ENCODE measurements at regions of chr1 and their contacts with region 1.

Region 1: GRCh38 chr1:109643385-109644230 is 12.3 kb upstream of the GSTM4 start:
- DNase-seq: peak; percentile 73 to 94 (median 86)
- ATAC-seq: peak; percentile 94
- H3K4me3 ChIP-seq: no peak overlapping the region
- H3K4me3 Mint-ChIP-seq: no peak overlapping the region
- H3K27ac ChIP-seq: no peak overlapping the region
- H3K27ac Mint-ChIP-seq: peak overlapping the region; percentile 45
- H3K4me1 ChIP-seq: peaks cover 13% of the 10 kb centered on the region
- H3K4me1 Mint-ChIP-seq: peaks cover 6% of the 10 kb centered on the region
- H3K27me3 ChIP-seq: no peaks in the 10 kb centered on the region
- H3K27me3 Mint-ChIP-seq: peaks cover 4% of the 10 kb centered on the region
- CTCF ChIP-seq: peak; percentile 81

Region 2: GRCh38 chr1:109426278-109427170 is 217.1 kb before region 1 on chr1 and contains the start of gene PSMA5:
- CTCF ChIA-PET with region 1: no interaction called
- POLR2A ChIA-PET with region 1: no interaction called
- intact Hi-C with region 1: no loop called
- DNase-seq: peak; percentile 87 to 99 (median 93)
- ATAC-seq: peak; percentile 90
- H3K4me3 ChIP-seq: peak within 1 kb of the TSS; percentile 83 to 84
- H3K4me3 Mint-ChIP-seq: peak within 1 kb of the TSS; percentile 98
- H3K27ac ChIP-seq: peak within 1 kb of the TSS; percentile 80 to 90
- H3K27ac Mint-ChIP-seq: peak within 1 kb of the TSS; percentile 99
- H3K4me1 ChIP-seq: peaks cover 39% of the 10 kb centered on the region
- H3K4me1 Mint-ChIP-seq: peaks cover 39% of the 10 kb centered on the region
- H3K27me3 ChIP-seq: no peaks in the 10 kb centered on the region
- H3K27me3 Mint-ChIP-seq: no peaks in the 10 kb centered on the region
- CTCF ChIP-seq: no peak
- total RNA-seq, gene PSMA5: 30.9 to 32.6 TPM

Region 3: GRCh38 chr1:109539676-109540075 is 103.9 kb before region 1 on chr1 and contains the start of gene GPR61:
- CTCF ChIA-PET with region 1: interaction called, 82 read pairs
- POLR2A ChIA-PET with region 1: no interaction called
- intact Hi-C with region 1: no loop called
- DNase-seq: no peak
- ATAC-seq: no peak
- H3K4me3 ChIP-seq: no peak within 1 kb of the TSS
- H3K4me3 Mint-ChIP-seq: no peak within 1 kb of the TSS
- H3K27ac ChIP-seq: no peak within 1 kb of the TSS
- H3K27ac Mint-ChIP-seq: no peak within 1 kb of the TSS
- H3K4me1 ChIP-seq: no peaks in the 10 kb centered on the region
- H3K4me1 Mint-ChIP-seq: no peaks in the 10 kb centered on the region
- H3K27me3 ChIP-seq: no peaks in the 10 kb centered on the region
- H3K27me3 Mint-ChIP-seq: no peaks in the 10 kb centered on the region
- CTCF ChIP-seq: no peak
- total RNA-seq, gene GPR61: 0.43 to 0.86 TPM

Region 4: DNA sequence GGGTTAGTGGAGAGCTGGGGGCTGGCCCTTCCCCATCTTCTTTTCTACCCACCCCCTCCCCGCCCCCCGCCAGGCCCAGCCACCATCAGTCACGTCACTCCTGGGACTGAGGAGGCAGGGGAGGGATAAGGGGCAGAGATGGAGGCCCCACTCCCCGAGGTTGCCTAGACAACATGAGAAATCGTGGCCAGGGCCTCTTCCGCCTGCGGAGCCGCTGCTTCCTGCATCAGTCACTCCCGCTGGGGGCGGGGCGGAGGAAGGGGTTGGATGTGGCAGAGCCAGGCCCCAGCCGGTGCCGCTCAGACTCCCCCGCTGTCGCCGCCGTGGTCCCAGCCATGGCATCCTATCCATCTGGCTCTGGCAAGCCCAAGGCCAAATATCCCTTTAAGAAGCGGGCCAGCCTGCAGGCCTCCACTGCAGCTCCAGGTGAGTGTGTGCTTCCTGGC is 22.7 kb before region 1 on chr1:
- CTCF ChIA-PET with region 1: interaction called, 50 read pairs
- POLR2A ChIA-PET with region 1: interaction called, 6 read pairs
- intact Hi-C with region 1: loop called in 1 of 2 experiments (anchors 1 kb)
- DNase-seq: peak; percentile 91 to 99 (median 97)
- ATAC-seq: peak; percentile 87
- H3K4me3 ChIP-seq: peak overlapping the region; percentile 90 to 92
- H3K4me3 Mint-ChIP-seq: peak overlapping the region; percentile 98
- H3K27ac ChIP-seq: peak overlapping the region; percentile 86 to 91
- H3K27ac Mint-ChIP-seq: peak overlapping the region; percentile 97
- H3K4me1 ChIP-seq: peaks cover 50% of the 10 kb centered on the region
- H3K4me1 Mint-ChIP-seq: peaks cover 64% of the 10 kb centered on the region
- H3K27me3 ChIP-seq: no peaks in the 10 kb centered on the region
- H3K27me3 Mint-ChIP-seq: no peaks in the 10 kb centered on the region
- CTCF ChIP-seq: no peak

Region 5: DNA sequence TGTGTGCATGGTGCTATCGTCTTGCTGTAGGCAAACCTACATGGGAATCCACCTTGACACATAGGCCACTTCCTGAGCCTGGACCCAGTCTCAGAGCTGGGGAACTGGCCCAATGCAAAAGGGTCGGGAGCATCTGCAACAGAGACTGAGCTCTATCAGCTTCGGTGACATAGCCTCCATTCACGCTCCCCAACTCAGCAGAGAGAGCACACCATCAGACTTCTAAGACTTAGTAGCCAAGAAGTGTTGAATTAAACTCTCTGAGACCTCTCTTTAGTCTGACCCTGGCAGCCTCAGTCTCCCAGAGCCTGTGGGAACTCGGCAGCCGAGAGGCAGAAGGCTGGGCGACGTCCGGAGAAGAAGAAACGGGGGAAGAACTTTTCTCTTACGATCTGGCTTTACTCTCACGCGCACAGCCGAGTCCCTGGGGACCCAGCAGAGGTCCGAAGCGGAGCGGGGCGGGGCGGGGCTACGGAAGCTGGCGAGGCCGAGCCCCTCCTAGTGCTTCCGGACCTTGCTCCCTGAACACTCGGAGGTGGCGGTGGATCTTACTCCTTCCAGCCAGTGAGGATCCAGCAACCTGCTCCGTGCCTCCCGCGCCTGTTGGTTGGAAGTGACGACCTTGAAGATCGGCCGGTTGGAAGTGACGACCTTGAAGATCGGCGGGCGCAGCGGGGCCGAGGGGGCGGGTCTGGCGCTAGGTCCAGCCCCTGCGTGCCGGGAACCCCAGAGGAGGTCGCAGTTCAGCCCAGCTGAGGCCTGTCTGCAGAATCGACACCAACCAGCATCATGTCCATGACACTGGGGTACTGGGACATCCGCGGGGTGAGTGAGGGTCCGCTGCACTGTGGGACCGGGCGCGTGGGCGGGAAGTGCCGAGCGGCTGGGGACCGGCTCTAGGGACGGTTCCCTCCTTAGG is 12.3 kb after region 1 on chr1 and contains the start of gene GSTM4:
- CTCF ChIA-PET with region 1: interaction called, 177 read pairs
- POLR2A ChIA-PET with region 1: interaction called, 4 read pairs
- intact Hi-C with region 1: loop called in 1 of 2 experiments (anchors 1 kb)
- DNase-seq: peak in 8 of 9 experiments; percentile 42 to 83 (median 66)
- ATAC-seq: peak; percentile 86
- H3K4me3 ChIP-seq: peak within 1 kb of the TSS; percentile 66 to 99
- H3K4me3 Mint-ChIP-seq: peak within 1 kb of the TSS; percentile 94
- H3K27ac ChIP-seq: peak within 1 kb of the TSS; percentile 55 to 77
- H3K27ac Mint-ChIP-seq: peak within 1 kb of the TSS; percentile 90
- H3K4me1 ChIP-seq: peaks cover 7% of the 10 kb centered on the region
- H3K4me1 Mint-ChIP-seq: peaks cover 22% of the 10 kb centered on the region
- H3K27me3 ChIP-seq: no peaks in the 10 kb centered on the region
- H3K27me3 Mint-ChIP-seq: no peaks in the 10 kb centered on the region
- CTCF ChIP-seq: no peak
- total RNA-seq, gene GSTM4: 9.5 to 10.5 TPM

Region 6: GRCh38 chr1:109687616-109688499 is 44.2 kb after region 1 on chr1 and contains the start of gene GSTM1:
- CTCF ChIA-PET with region 1: interaction called, 31 read pairs
- POLR2A ChIA-PET with region 1: interaction called, 7 read pairs
- intact Hi-C with region 1: loop called (anchors 2 to 5 kb)
- DNase-seq: peak in 5 of 9 experiments; percentile 46 to 92 (median 85)
- ATAC-seq: peak; percentile 98
- H3K4me3 ChIP-seq: peak within 1 kb of the TSS; percentile 60 to 63
- H3K4me3 Mint-ChIP-seq: peak within 1 kb of the TSS; percentile 87
- H3K27ac ChIP-seq: peak within 1 kb of the TSS; percentile 43 to 53
- H3K27ac Mint-ChIP-seq: peak within 1 kb of the TSS; percentile 91
- H3K4me1 ChIP-seq: no peaks in the 10 kb centered on the region
- H3K4me1 Mint-ChIP-seq: peaks cover 8% of the 10 kb centered on the region
- H3K27me3 ChIP-seq: no peaks in the 10 kb centered on the region
- H3K27me3 Mint-ChIP-seq: no peaks in the 10 kb centered on the region
- CTCF ChIP-seq: no peak
- total RNA-seq, gene GSTM1: 11.5 to 14.0 TPM

Region 7: DNA sequence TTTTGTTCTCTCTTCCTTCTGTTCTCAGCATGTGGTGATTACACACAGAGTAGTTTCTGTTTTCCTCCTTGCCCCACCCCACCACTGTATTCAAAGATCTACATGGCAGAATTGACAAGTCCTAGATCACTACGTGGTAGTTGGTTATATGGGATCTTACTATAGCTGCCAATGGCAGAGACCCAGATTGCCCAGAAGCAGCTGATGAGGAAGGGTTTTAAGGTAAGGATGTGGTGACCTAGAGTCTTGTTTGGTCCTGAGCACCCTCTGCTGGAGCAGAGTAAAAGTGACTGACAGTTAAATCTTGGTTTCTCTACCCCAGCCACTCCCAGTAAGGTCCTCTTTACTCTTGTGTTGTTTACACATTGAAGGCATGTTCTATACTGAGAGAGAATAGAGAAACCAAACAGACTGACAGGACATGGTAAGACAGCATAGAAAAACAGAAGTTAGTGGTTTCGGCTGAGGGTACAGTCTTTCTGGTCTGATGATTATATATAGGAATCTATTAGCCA is 368.0 kb after region 1 on chr1:
- CTCF ChIA-PET with region 1: interaction called, 6 read pairs
- POLR2A ChIA-PET with region 1: no interaction called
- intact Hi-C with region 1: loop called in 1 of 2 experiments (anchors 2 kb)
- DNase-seq: peak in 5 of 9 experiments; percentile 12 to 62 (median 30)
- ATAC-seq: peak; percentile 95
- H3K4me3 ChIP-seq: no peak overlapping the region
- H3K4me3 Mint-ChIP-seq: no peak overlapping the region
- H3K27ac ChIP-seq: no peak overlapping the region
- H3K27ac Mint-ChIP-seq: no peak overlapping the region
- H3K4me1 ChIP-seq: no peaks in the 10 kb centered on the region
- H3K4me1 Mint-ChIP-seq: peaks cover 2% of the 10 kb centered on the region
- H3K27me3 ChIP-seq: no peaks in the 10 kb centered on the region
- H3K27me3 Mint-ChIP-seq: no peaks in the 10 kb centered on the region
- CTCF ChIP-seq: peak; percentile 46